Stomach (tissue), 19 donors: ENCODE measurements at regions of chr1 and their contacts with region 1.

Region 1: GRCh38 chr1:111507411-111508201 is 4.2 kb upstream of the ADORA3 start:
- DNase-seq: peak; percentile 57 to 83
- H3K4me3 ChIP-seq: peak overlapping the region; percentile 22 to 37 (median 28)
- H3K27ac ChIP-seq: peak overlapping the region; percentile 87 to 97 (median 91)
- H3K4me1 ChIP-seq: peaks cover 22 to 76% (median 39%) of the 10 kb centered on the region in 4 donors
- H3K27me3 ChIP-seq: no peaks in the 10 kb centered on the region
- CTCF ChIP-seq: no peak
- EP300 ChIP-seq: no peak
- POLR2A ChIP-seq: no peak

Region 2: GRCh38 chr1:111227851-111228747 is 279.5 kb before region 1 on chr1:
- intact Hi-C with region 1: no loop called
- DNase-seq: peak; percentile 31 to 58
- H3K4me3 ChIP-seq: no peak overlapping the region
- H3K27ac ChIP-seq: peak overlapping the region in 4 of 5 donors; percentile 39 to 66 (median 57)
- H3K4me1 ChIP-seq: peaks cover 14 to 35% (median 19%) of the 10 kb centered on the region in 4 donors
- H3K27me3 ChIP-seq: no peaks in the 10 kb centered on the region
- CTCF ChIP-seq: no peak
- EP300 ChIP-seq: no peak
- POLR2A ChIP-seq: no peak

Region 3: GRCh38 chr1:111654839-111655238 is 147.2 kb after region 1 on chr1:
- intact Hi-C with region 1: loop called (anchors 5 kb)
- DNase-seq: no peak
- H3K4me3 ChIP-seq: no peak overlapping the region
- H3K27ac ChIP-seq: no peak overlapping the region
- H3K4me1 ChIP-seq: peaks cover 5 to 86% (median 44%) of the 10 kb centered on the region in 4 donors
- H3K27me3 ChIP-seq: no peaks in the 10 kb centered on the region
- CTCF ChIP-seq: no peak
- EP300 ChIP-seq: no peak
- POLR2A ChIP-seq: no peak